ENCODE measurements at regions of chr2 and their contacts with region 1.

Region 1: DNA sequence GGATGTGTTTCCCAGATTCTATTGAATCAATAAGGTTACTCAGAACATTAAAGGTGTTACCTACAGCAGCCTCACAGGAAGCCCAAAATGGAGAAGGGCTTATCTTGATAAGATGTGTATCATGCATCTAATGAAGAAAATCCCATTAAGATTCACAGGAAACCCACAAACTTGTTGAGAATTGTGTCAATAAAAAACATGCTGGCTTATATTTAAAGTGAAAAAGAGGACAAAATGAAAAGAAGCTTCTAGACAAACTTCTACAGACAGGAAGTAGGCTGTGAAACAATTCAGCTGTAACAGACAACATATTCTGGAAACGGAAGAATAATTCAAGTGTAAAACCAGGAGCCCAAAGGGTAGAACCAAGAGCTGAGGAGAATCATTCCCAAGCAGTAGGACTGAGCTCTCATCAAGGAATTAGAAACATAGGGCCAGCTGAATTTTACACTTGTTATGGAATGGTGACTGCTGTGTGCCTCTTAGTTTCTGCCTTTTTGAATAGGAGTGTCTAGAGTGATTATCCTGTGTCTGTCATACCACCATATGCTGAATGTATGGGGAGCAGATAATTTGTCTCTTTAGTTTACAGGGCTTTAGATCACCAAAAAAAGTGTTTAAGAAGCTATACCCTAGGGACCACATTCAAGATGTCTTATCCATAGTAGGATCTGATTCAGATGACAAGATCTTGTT is 9.6 kb downstream of the IMMT start:
- DNase-seq: no peak
- H3K4me3 Mint-ChIP-seq: peak overlapping the region; percentile 28
- H3K27ac Mint-ChIP-seq: peak overlapping the region; percentile 91
- H3K4me1 Mint-ChIP-seq: peaks cover 70% of the 10 kb centered on the region
- H3K27me3 Mint-ChIP-seq: no peaks in the 10 kb centered on the region

Region 2: DNA sequence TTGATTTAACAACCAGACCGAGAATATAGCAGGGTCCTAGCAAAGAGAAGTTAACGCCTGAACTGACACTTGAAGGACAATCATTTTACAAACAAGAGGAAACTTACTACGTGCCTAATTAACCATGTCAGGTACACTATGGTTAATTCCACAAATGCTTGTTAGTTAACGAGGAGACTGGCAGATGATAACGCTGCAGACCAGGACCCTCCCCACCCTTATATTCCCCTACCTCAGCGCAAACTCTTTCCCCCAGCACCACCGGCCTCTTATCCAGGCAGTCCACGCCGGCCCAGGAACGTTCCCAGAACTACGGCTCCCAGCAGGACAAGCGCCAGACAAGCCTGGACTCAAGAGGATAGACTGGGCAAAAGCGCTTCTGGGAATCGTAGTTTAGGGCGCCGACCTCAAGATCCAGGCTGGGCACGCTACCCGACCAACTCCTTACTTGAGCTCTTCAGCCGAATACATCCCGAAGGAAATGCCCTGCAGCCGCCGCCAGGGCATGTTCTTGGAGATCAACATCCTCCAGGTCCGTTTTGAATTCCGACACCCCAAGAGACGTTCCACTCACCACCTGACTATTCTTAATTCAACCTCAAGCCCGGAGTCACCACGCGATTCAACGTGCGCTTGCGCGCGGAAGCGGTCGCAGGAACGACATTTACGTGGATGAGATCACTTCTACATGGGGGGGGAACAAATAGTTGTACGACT is 80.3 kb before region 1 on chr2 and contains the start of gene POLR1A:
- CTCF ChIA-PET with region 1: no interaction called
- intact Hi-C with region 1: loop called (anchors 2 kb)
- DNase-seq: peak; percentile 87
- H3K4me3 Mint-ChIP-seq: peak within 1 kb of the TSS; percentile 89
- H3K27ac Mint-ChIP-seq: peak within 1 kb of the TSS; percentile 99
- H3K4me1 Mint-ChIP-seq: peaks cover 57% of the 10 kb centered on the region
- H3K27me3 Mint-ChIP-seq: no peaks in the 10 kb centered on the region
- total RNA-seq, gene POLR1A: 25.3 to 27.1 TPM

Region 3: DNA sequence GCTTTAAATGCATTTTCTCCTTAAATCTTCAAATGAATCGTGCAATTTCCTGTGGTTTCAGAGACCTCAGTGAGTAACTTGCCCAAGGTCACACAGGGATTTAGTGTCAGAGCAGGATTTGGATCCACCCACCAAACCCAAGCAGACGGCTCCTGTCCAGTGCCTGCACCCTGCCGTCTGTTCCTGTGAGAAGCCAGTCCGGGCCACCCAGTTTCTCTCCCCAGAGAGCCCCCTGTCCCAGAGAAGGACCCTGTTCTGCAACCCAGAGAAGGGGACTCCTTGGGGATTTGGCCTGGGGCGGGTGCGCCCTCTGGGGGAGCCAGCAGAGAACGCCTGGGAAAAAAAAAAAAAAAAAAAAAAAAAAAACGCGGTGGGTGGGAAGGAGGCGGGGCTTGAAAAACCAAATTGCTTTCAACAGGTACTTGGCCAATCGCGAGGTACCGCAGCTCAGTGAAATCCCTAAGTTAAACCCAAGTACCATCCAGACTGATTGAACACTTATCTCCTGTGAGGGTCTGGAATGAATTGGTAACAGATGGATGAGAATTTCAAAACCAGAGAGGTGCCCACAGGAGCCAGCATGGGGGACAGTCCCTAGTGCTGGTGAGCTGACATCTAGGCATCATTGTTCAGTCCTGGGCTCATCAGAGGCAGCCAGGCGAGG is 182.6 kb after region 1 on chr2:
- CTCF ChIA-PET with region 1: interaction called, 7 read pairs
- intact Hi-C with region 1: loop called (anchors 1 kb)
- DNase-seq: peak; percentile 46
- H3K4me3 Mint-ChIP-seq: peak overlapping the region; percentile 66
- H3K27ac Mint-ChIP-seq: peak overlapping the region; percentile 64
- H3K4me1 Mint-ChIP-seq: peaks cover 48% of the 10 kb centered on the region
- H3K27me3 Mint-ChIP-seq: no peaks in the 10 kb centered on the region